Activated B cell treated with CpG ODN at 0.5 μM for 24 hours (primary cell): ENCODE measurements at regions of chr6 and their contacts with region 1.

Region 1: DNA sequence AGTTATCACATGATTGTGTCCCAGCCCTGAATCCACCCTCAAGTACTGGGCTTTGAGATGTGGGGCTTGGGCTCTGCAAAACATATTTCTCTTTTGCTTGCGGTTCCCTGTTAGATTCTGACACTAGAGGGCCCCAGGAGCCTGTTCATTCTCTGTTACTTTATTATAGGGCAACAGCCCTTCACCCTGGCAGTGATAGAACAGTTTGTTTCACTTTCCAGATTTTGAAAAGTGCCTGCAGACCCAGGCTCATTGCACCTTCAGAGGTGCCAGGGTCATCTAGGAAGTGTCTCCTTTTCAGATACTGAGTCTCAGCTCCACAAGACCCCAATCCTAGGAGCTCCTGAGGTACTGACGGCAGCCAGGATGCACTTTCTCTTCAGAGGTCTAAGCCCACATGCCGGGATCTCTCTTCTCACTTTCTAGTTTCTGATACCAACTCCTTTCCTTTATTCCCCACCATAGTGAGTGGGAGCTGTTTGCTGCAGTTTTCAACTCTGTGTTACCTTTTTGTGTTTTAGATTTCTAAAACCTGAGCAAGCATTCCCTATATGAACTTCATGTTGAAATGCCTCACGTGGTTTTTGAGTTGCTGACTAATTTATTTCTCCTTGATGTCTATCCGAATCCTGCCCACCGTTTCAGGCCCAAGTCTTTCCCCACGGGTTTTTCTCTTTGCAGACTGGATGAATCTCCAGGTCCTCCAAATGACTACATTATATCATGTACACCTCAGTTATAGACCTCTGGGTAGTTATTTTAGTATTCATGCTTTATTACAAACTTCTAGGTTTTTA is 10.9 kb downstream of the ABT1 start:
- DNase-seq: no peak
- ATAC-seq: peak; percentile 82
- H3K4me3 Mint-ChIP-seq: no peak overlapping the region
- H3K27ac Mint-ChIP-seq: no peak overlapping the region
- H3K4me1 Mint-ChIP-seq: no peaks in the 10 kb centered on the region
- H3K27me3 Mint-ChIP-seq: peaks cover 8% of the 10 kb centered on the region
- CTCF ChIP-seq: no peak

Region 2: DNA sequence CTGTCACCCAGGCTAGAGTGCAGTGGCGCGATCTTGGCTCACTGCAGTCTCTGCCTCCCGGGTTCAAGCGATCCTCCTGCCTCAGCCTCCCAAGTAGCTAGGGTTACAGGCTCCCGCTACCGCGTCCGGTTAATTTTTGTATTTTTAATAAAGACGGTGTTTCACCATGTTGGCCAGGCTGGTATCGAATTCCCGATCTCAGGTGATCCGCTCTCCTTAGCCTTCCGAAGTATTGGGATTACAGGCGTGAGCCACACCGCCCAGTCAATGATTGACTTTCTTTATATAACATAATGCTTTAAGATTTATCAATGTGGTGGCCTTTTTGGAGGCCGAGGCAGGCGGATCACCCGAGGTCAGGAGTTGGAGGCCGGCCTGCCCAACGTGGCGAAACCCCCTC is 18.7 kb before region 1 on chr6:
- CTCF ChIA-PET with region 1: no interaction called
- POLR2A ChIA-PET with region 1: no interaction called
- intact Hi-C with region 1: no loop called
- DNase-seq: no peak
- ATAC-seq: no peak
- H3K4me3 Mint-ChIP-seq: no peak overlapping the region
- H3K27ac Mint-ChIP-seq: no peak overlapping the region
- H3K4me1 Mint-ChIP-seq: no peaks in the 10 kb centered on the region
- H3K27me3 Mint-ChIP-seq: peaks cover 24% of the 10 kb centered on the region
- CTCF ChIP-seq: no peak

Region 3: DNA sequence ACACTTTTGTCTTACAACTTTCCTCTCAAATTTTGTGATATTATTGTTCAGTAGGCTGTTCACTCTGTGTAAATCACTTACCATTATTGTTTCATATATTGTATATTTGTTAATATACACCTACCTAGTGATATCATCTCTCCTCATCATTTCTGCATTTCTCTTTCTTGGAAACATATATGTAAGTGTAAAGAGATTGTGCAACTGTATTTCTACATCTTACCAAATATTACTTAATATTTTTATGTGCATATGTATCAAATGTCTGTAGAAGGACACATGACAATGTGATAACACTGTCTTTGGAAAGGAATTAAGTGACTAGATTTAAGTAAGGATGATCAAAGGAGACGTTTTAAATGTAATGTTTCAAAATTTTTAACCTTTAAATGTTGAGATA is 21.7 kb after region 1 on chr6:
- CTCF ChIA-PET with region 1: no interaction called
- POLR2A ChIA-PET with region 1: no interaction called
- intact Hi-C with region 1: no loop called
- DNase-seq: no peak
- ATAC-seq: no peak
- H3K4me3 Mint-ChIP-seq: no peak overlapping the region
- H3K27ac Mint-ChIP-seq: no peak overlapping the region
- H3K4me1 Mint-ChIP-seq: no peaks in the 10 kb centered on the region
- H3K27me3 Mint-ChIP-seq: no peaks in the 10 kb centered on the region
- CTCF ChIP-seq: no peak

Region 4: DNA sequence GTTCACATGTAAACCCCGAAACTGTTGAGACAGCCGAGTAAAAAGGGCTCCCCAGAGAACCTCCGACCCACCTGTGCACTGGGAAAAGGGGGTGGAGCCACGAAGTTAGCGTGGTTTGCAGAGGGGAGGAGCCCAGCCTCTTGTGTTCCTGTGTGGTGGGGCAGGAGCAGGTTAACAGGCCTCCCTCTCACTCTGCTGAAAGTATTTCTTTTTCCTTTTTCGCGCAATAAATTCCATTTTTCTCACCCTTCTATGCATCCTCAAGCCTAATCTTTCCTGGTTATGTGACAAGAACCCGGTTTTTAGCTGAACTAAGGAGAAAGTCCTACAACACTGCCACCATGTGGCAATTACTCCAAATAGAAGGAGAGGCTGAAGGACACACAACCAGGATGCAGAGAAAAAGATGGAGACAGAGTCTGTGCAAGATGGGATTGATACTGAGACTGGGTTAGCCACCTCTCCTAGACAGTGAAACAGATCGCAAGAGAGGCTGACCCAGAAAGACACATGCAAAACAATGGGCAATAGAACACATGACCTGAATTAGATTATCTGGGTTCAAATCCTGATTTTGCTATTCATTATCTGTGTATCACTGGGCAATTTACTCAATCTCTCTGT is 471.2 kb after region 1 on chr6:
- CTCF ChIA-PET with region 1: interaction called, 13 read pairs
- POLR2A ChIA-PET with region 1: no interaction called
- intact Hi-C with region 1: loop called (anchors 1 kb)
- DNase-seq: no peak
- ATAC-seq: peak; percentile 65
- H3K4me3 Mint-ChIP-seq: peak overlapping the region; percentile 61
- H3K27ac Mint-ChIP-seq: no peak overlapping the region
- H3K4me1 Mint-ChIP-seq: peaks cover 6% of the 10 kb centered on the region
- H3K27me3 Mint-ChIP-seq: peaks cover 46% of the 10 kb centered on the region
- CTCF ChIP-seq: no peak

Region 5: GRCh38 chr6:27157459-27158315 is 550.1 kb after region 1 on chr6:
- CTCF ChIA-PET with region 1: no interaction called
- POLR2A ChIA-PET with region 1: no interaction called
- intact Hi-C with region 1: loop called (anchors 5 kb)
- DNase-seq: peak; percentile 60
- ATAC-seq: peak; percentile 80
- H3K4me3 Mint-ChIP-seq: peak overlapping the region; percentile 89
- H3K27ac Mint-ChIP-seq: peak overlapping the region; percentile 81
- H3K4me1 Mint-ChIP-seq: peaks cover 33% of the 10 kb centered on the region
- H3K27me3 Mint-ChIP-seq: no peaks in the 10 kb centered on the region
- CTCF ChIP-seq: no peak